ENCODE measurements at regions of chr1 and their contacts with region 1.

Region 1: GRCh38 chr1:11749203-11749689 is 12.7 kb upstream of the C1orf167 start:
- DNase-seq: peak; percentile 83
- H3K4me3 Mint-ChIP-seq: no peak overlapping the region
- H3K27ac Mint-ChIP-seq: no peak overlapping the region
- H3K4me1 Mint-ChIP-seq: peaks cover 34% of the 10 kb centered on the region
- H3K27me3 Mint-ChIP-seq: peaks cover 7% of the 10 kb centered on the region

Region 2: DNA sequence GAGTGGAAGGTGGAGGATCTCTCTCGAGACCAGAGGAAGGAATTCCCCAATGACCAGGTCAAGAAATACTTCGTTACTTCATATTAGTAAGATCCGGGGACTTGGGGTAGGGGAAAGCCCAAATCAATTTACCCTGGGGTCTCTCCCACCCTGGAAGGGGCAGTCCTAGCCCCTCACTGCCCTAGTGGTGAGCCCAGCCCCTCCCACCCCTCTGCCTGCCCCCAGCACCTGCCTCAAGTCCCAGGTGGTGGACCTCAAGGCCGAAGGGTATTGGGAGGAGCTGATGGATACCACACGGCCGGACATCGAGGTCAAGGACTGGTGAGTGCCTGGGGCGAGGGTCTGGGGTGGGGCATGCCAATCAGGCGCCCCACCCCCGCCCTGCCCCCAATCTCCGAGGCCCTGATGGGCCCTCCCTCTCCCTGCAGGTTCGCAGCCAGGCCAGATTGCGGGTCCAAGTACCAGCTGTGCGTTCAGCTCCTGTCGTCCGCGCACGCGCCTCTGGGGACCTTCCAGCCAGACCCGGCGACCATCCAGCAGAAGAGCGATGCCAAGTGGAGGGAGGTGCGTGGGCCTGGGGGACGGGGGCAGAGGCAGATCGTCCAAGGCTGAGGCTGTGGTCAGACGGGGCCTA is 90.8 kb before region 1 on chr1:
- CTCF ChIA-PET with region 1: interaction called, 13 read pairs
- DNase-seq: no peak
- H3K4me3 Mint-ChIP-seq: no peak overlapping the region
- H3K27ac Mint-ChIP-seq: no peak overlapping the region
- H3K4me1 Mint-ChIP-seq: peaks cover 12% of the 10 kb centered on the region
- H3K27me3 Mint-ChIP-seq: peaks cover 7% of the 10 kb centered on the region

Region 3: GRCh38 chr1:11784993-11785769 is 35.9 kb after region 1 on chr1:
- CTCF ChIA-PET with region 1: no interaction called
- DNase-seq: peak; percentile 54
- H3K4me3 Mint-ChIP-seq: no peak overlapping the region
- H3K27ac Mint-ChIP-seq: no peak overlapping the region
- H3K4me1 Mint-ChIP-seq: no peaks in the 10 kb centered on the region
- H3K27me3 Mint-ChIP-seq: peaks cover 9% of the 10 kb centered on the region

Measured in activated naive CD4-positive, alpha-beta T cell treated with anti-CD3 and anti-CD28 coated beads, Interleukin-2, amount 10 ng/mL, durations not matched to agents 7 days and 5 days (primary cell).